IMR-90 (cell line): ENCODE measurements at regions of chr22 and their contacts with region 1.

Region 1: DNA sequence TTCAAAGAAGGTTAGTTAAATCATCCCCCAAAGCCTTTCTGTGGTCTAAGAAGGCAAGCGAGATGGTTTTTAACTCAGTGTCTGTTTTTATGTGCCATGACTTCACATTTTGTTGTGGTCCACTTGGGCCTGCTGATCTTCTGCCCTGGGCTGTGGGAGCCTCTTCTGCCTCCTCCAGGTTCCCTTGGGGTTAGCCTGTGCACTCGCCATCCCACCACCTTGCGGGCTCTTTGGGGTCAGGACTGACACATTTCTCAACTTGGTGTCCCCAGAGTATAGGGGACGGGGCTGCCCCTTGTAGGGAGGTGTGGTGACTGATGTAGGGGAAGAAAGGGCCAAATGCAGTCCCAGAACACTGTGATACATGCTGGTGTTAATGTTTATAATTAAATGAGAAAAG is 207.0 kb downstream of the TBC1D22A start:
- DNase-seq: no peak
- ATAC-seq: no peak
- H3K4me3 ChIP-seq: no peak overlapping the region
- H3K27ac ChIP-seq: no peak overlapping the region
- H3K4me1 ChIP-seq: peaks cover 9% of the 10 kb centered on the region
- H3K27me3 ChIP-seq: no peaks in the 10 kb centered on the region
- CTCF ChIP-seq: no peak
- POLR2A ChIP-seq: no peak
- RAD21 ChIP-seq: no peak

Region 2: DNA sequence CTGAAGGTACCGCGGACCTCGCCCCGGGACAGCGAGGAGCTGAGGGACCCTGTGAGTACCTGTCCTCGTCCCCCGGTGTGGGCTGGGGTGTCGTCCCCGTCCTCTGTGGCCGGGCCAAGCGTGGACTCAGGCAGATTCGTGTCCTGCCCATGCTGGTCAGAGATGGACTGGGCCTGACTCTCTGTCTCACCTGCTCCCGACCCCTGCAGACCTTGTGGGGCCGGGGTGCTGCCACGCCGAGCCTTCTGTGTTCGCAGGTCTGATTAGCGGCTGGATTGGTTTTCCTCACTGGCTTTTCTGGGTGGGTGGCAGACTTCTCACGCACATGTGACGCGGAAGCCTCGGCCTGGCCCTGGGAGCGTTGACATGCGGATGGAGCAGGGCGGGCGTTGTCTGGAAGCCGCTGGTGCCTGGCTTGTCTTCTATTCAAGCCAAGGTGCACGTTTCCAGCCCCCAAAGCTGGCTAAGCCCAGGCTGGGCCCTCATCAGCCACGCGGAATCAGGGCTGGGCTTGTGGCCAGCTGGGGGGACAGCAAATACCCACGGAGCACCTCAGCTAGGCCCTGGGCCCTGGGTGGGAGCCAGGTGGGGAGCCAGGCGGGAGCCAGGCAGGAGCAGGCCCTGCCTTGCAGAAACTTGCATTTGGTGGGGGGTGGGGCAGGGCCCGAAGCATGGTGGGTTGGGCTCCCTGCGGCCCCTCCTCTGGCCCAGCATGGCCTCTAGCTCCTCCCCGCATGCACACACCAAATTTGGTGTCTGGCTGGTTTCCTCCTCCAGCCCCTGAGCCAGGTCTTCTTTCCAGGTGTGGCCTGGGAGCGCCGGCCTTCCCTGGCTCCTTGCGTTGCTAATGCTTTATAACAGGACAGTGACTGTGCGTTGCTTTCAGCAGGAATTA is 342.3 kb before region 1 on chr22:
- CTCF ChIA-PET with region 1: no interaction called
- POLR2A ChIA-PET with region 1: no interaction called
- dilution Hi-C with region 1: no loop called
- in situ Hi-C with region 1: no loop called
- intact Hi-C with region 1: no loop called
- DNase-seq: no peak
- ATAC-seq: no peak
- H3K4me3 ChIP-seq: no peak overlapping the region
- H3K27ac ChIP-seq: no peak overlapping the region
- H3K4me1 ChIP-seq: no peaks in the 10 kb centered on the region
- H3K27me3 ChIP-seq: no peaks in the 10 kb centered on the region
- CTCF ChIP-seq: no peak
- POLR2A ChIP-seq: no peak
- RAD21 ChIP-seq: no peak

Region 3: GRCh38 chr22:46798366-46799350 is 170.8 kb before region 1 on chr22:
- CTCF ChIA-PET with region 1: no interaction called
- POLR2A ChIA-PET with region 1: no interaction called
- dilution Hi-C with region 1: no loop called
- in situ Hi-C with region 1: no loop called
- intact Hi-C with region 1: loop called (anchors 10 kb)
- DNase-seq: peak; percentile 66
- ATAC-seq: peak; percentile 98
- H3K4me3 ChIP-seq: no peak overlapping the region
- H3K27ac ChIP-seq: no peak overlapping the region
- H3K4me1 ChIP-seq: peaks cover 6% of the 10 kb centered on the region; the same call in 1 of the 2 replicates
- H3K27me3 ChIP-seq: no peaks in the 10 kb centered on the region
- CTCF ChIP-seq: peak; percentile 92
- POLR2A ChIP-seq: no peak
- RAD21 ChIP-seq: peak; percentile 98

Region 4: DNA sequence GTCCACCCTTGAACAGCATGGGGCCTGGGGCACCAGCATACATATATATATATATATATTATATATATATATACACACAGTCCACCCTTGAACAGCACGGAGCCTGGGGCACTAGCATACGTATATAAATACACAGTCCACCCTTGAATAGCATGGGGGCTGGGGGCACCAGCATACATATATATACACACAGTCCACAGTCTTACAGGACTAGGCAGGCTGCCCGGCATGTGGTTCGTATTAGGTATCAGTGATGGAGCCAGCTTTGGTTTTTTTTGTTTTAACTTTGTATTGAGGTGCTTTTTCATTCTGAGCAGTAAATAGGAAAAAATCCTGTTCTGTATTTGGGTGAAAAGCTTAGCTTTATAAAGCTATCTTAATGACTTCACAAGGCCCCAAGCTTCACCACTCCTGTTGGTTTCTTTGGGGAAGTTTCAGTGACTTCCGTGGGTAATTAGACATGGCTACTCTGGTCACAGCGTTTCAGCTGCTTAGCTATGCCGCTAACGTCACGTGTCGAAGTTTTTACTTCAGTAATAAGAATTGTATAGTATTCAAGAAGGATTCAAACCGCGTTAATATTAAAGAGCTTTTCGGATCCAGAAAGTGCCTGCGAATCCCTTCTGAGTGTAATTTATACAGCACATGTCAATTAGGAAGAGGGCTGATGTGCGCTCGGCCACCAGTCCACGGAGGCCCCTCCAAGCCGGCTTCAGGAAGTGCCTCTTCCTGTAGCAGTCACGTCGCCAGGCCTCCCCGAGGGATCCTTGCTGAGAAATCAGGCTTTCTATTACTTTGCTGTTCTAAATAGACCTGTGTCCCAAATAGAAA is 27.3 kb before region 1 on chr22:
- CTCF ChIA-PET with region 1: no interaction called
- POLR2A ChIA-PET with region 1: no interaction called
- dilution Hi-C with region 1: no loop called
- in situ Hi-C with region 1: no loop called
- intact Hi-C with region 1: no loop called
- DNase-seq: peak; percentile 13
- ATAC-seq: no peak; the same call in 1 of the 2 replicates
- H3K4me3 ChIP-seq: no peak overlapping the region
- H3K27ac ChIP-seq: no peak overlapping the region
- H3K4me1 ChIP-seq: no peaks in the 10 kb centered on the region
- H3K27me3 ChIP-seq: no peaks in the 10 kb centered on the region
- CTCF ChIP-seq: no peak
- POLR2A ChIP-seq: no peak
- RAD21 ChIP-seq: no peak